Activated naive CD4-positive, alpha-beta T cell treated with anti-CD3 and anti-CD28 coated beads, Interleukin-2, amount 10 ng/mL, durations not matched to agents 7 days and 5 days (primary cell): ENCODE measurements at regions of chr20 and their contacts with region 1.

Region 1: GRCh38 chr20:47272893-47273590 is 83.5 kb downstream of the ZMYND8 start:
- DNase-seq: peak; percentile 53
- H3K4me3 Mint-ChIP-seq: no peak overlapping the region
- H3K27ac Mint-ChIP-seq: no peak overlapping the region
- H3K4me1 Mint-ChIP-seq: peaks cover 24% of the 10 kb centered on the region
- H3K27me3 Mint-ChIP-seq: no peaks in the 10 kb centered on the region

Region 2: DNA sequence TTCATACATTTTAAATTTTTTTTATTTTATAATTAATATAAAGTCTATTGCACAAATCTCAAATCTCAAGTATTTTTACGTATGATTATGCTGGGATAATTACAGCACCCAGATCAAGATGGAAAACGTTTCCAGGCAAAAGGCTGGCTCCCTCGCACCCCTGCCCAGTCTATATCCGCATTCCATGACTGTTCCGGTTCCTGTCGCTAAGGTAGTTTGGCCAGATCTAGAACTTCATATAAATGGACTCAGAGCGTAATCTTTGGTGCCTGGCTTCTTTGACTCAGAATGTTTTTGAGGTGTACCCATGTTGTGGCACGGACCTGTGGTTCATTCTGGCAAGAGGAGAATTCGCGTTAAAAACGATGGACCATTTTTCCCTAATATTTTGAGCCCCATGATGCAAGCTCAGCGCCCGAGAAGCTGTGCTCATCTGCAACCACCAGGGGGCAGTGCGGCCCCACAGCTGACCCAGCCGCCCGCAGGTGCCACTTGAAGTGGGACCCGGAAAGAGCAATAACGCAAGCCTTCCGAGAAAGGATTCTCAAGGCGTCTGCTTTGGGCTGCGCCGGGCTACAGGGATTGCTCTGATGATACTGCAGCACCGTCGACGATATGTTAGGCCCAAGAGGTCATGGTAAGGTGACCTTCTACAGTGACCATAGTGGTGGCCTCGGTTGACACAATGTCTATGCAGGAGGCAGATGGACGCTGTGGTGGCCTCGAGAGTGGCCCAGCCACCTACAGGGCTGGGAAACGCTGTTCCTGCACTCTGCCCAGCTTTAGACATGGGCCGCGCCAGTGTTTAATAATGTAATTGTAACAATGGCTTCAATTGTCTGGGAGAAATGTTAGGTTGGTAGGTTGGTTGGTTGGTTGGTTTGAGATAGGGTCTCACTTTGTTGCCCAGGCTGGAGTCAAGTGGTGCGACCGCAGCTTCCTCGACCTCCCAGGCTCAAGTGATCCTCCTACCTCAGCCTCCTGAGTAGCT is 76.7 kb before region 1 on chr20:
- CTCF ChIA-PET with region 1: interaction called, 22 read pairs
- DNase-seq: peak; percentile 85
- H3K4me3 Mint-ChIP-seq: no peak overlapping the region
- H3K27ac Mint-ChIP-seq: no peak overlapping the region
- H3K4me1 Mint-ChIP-seq: peaks cover 12% of the 10 kb centered on the region
- H3K27me3 Mint-ChIP-seq: peaks cover 27% of the 10 kb centered on the region

Region 3: GRCh38 chr20:47262365-47263013 is 10.6 kb before region 1 on chr20:
- CTCF ChIA-PET with region 1: interaction called, 20 read pairs
- DNase-seq: no peak
- H3K4me3 Mint-ChIP-seq: no peak overlapping the region
- H3K27ac Mint-ChIP-seq: peak overlapping the region; percentile 63
- H3K4me1 Mint-ChIP-seq: peaks cover 9% of the 10 kb centered on the region
- H3K27me3 Mint-ChIP-seq: no peaks in the 10 kb centered on the region

Region 4: DNA sequence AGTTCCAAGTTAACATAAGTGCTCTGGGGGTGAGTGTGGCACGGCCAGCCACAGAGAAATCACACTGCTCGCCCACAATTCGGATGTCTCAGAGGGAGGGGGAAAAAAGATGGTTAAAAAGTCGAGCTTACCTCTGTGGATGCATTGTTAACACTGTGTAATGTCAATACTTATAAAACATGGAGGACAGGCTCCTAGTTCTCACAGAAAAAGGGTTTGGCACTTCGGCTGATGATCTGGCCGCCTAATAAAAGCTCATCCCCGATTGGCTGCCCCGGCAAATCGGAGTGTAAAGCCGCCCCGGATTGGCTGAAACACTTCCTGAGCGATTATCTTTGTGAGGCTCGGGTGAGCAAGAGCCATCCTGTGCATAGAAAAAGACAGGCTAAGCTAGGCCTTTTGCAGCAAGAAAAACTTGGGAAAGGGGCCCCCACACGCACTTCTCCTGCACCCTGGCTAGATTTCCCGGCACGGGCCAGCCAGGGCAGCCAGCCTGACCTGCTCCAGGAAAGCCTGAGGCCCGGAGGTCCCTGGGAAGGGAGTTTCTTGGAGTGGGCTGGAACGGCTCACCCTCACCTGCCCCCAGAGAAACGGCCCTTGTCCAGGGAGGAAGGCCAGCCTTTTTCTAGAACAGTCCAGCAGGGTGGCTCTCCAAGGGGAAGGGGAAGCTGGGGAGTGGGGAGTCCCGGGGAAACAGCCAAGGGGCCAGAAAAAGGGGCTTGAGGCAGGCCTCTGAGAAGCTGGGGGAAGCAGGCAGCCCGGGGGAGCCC is 83.7 kb after region 1 on chr20 and contains the start of gene ZMYND8:
- CTCF ChIA-PET with region 1: interaction called, 30 read pairs
- DNase-seq: peak; percentile 94
- H3K4me3 Mint-ChIP-seq: peak within 1 kb of the TSS; percentile 88
- H3K27ac Mint-ChIP-seq: peak within 1 kb of the TSS; percentile 98
- H3K4me1 Mint-ChIP-seq: peaks cover 45% of the 10 kb centered on the region
- H3K27me3 Mint-ChIP-seq: no peaks in the 10 kb centered on the region

Region 5: DNA sequence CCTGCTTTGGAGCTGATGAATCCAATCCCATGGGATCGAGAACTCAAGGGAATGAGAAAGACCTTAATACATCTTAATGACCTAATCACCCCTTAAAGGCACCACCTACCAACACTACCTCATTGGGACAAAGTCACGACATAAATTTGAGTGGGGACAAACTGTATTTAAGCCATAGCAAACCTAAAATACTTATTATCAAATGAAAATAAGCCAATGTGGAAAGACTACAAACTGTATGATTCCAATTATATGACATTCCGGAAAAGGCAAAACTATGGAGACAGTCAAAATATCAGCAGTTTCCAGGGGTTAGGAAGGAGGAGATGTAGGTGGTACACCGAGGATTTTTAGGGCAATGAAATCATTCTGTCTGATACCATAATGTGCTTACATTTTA is 175.4 kb after region 1 on chr20:
- CTCF ChIA-PET with region 1: no interaction called
- DNase-seq: no peak
- H3K4me3 Mint-ChIP-seq: no peak overlapping the region
- H3K27ac Mint-ChIP-seq: peak overlapping the region; percentile 24
- H3K4me1 Mint-ChIP-seq: peaks cover 12% of the 10 kb centered on the region
- H3K27me3 Mint-ChIP-seq: no peaks in the 10 kb centered on the region

Region 6: DNA sequence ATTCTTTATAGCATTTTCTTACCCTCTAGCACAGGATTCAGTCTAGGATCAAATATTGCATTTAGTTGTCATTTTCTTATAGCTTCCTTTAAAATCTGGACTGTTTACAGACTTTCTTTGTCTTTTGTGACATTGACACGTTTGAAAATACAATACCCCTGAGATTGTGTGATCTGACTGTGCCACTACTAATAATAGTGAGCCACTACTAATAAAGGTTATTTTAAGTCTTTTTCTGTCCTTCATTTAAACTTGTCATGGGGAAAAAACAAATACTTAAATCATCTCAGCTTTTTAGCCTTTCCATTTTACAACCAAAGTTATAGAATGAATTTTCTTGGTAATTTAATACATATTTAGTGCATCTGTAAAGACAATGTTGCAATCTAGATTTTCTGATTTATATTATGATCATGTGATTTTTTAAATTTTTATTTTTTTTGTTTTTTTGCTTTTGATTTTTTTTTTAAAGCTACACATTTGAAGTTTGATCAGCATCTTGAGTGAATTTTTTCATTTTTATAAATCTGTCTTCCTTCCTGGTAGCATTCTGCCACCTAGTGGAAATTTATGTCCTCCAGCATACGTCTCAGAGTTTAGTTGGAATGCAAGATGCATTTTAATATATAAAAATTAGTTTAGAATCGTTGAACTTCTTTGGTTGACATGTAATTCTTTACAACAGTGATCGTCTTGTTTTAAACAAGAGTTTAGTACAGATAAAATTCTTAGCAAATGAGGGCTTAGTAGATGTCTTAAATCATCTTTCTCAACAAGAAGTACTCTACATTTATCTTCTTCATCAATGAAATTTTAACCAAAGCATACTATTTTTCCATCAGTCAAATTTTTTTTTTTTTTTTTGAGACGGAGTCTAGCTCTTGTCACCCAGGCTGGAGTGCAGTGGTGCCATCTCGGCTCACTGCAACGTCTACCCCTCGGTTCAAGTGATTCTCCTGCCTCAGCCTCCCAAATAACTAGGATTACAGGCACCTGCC is 348.1 kb after region 1 on chr20:
- CTCF ChIA-PET with region 1: interaction called, 29 read pairs
- DNase-seq: peak; percentile 29
- H3K4me3 Mint-ChIP-seq: no peak overlapping the region
- H3K27ac Mint-ChIP-seq: no peak overlapping the region
- H3K4me1 Mint-ChIP-seq: peaks cover 35% of the 10 kb centered on the region
- H3K27me3 Mint-ChIP-seq: no peaks in the 10 kb centered on the region